ENCODE measurements at regions of chr1 and their contacts with region 1.

Region 1: GRCh38 chr1:94191216-94191615 is 46.2 kb downstream of the ARHGAP29 start:
- DNase-seq: no peak
- H3K4me3 ChIP-seq: no peak overlapping the region
- H3K27ac ChIP-seq: peak overlapping the region; percentile 40
- H3K4me1 ChIP-seq: peaks cover 3% of the 10 kb centered on the region; the same call in 1 of the 2 replicates
- H3K27me3 ChIP-seq: no peaks in the 10 kb centered on the region
- CTCF ChIP-seq: no peak

Region 2: GRCh38 chr1:93904228-93904627 is 287.0 kb before region 1 on chr1:
- CTCF ChIA-PET with region 1: no interaction called
- POLR2A ChIA-PET with region 1: no interaction called
- intact Hi-C with region 1: loop called (anchors 10 kb)
- DNase-seq: peak in 1 of 2 experiments; percentile 28
- H3K4me3 ChIP-seq: peak overlapping the region; percentile 68; the same call in 1 of the 2 replicates
- H3K27ac ChIP-seq: peak overlapping the region; percentile 80
- H3K4me1 ChIP-seq: peaks cover 37% of the 10 kb centered on the region
- H3K27me3 ChIP-seq: no peaks in the 10 kb centered on the region
- CTCF ChIP-seq: no peak

Region 3: DNA sequence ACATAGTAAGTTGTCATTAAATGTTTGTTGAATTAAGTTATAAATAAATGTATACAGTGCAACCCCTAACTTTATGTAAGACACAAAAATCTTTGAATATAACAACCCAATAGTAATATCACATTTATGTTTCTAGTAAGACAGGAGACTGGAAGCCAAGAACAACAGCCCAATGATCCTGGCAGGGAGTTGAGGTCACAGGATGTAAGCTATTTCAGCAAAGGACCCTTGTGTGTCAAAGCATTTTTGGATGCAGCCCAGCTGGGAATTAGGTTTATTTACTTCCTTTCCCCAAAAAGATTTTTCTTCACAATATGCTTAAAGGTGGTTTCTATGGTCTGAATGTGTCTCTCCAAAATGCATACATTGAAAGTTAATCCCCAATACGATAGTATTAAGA is 36.2 kb before region 1 on chr1:
- CTCF ChIA-PET with region 1: no interaction called
- POLR2A ChIA-PET with region 1: no interaction called
- intact Hi-C with region 1: no loop called
- DNase-seq: no peak
- H3K4me3 ChIP-seq: no peak overlapping the region
- H3K27ac ChIP-seq: no peak overlapping the region
- H3K4me1 ChIP-seq: no peaks in the 10 kb centered on the region
- H3K27me3 ChIP-seq: no peaks in the 10 kb centered on the region
- CTCF ChIP-seq: no peak

Region 4: DNA sequence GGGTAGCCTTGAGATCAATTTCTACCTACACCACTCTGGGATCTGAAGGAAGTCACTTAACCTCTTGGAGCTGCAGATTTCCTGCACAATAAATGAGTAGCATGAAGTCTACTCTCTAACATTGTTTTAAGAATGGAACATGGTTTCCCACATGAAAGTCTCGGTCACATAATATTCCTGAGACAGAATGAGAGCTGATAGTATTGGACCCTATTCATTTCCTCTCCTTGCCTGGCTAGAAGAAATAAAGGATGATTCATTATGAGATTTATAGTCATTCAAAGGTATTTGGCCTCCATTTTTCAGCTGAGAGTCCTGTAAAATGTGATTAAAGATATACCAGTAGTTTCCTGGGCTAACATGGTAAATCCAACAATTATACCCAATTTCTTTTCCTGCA is 10.6 kb before region 1 on chr1:
- CTCF ChIA-PET with region 1: no interaction called
- POLR2A ChIA-PET with region 1: interaction called, 10 read pairs
- intact Hi-C with region 1: no loop called
- DNase-seq: no peak
- H3K4me3 ChIP-seq: no peak overlapping the region
- H3K27ac ChIP-seq: peak overlapping the region; percentile 31
- H3K4me1 ChIP-seq: no peaks in the 10 kb centered on the region
- H3K27me3 ChIP-seq: no peaks in the 10 kb centered on the region
- CTCF ChIP-seq: no peak

Region 5: DNA sequence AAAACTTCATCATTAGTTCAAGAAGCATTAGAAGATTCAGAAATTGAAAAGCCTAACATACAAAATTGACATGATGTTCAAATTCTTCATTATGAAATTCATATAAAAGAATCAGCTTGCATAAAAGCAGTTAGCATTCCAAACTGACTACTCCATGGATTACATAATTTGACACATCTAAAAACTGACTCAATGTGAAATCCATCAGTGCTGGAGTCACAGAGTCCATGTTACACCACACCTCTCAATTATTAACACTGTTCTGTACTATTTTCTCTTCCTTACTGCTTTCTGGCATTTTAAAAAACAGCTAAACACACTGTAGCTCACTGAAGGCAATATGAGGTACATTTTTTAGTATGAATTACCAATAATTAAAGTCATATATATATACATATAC is 18.2 kb after region 1 on chr1:
- CTCF ChIA-PET with region 1: interaction called, 10 read pairs
- POLR2A ChIA-PET with region 1: interaction called, 6 read pairs
- intact Hi-C with region 1: no loop called
- DNase-seq: peak in 1 of 2 experiments; percentile 80
- H3K4me3 ChIP-seq: no peak overlapping the region
- H3K27ac ChIP-seq: peak overlapping the region; percentile 35
- H3K4me1 ChIP-seq: peaks cover 6% of the 10 kb centered on the region
- H3K27me3 ChIP-seq: no peaks in the 10 kb centered on the region
- CTCF ChIP-seq: no peak

Region 6: DNA sequence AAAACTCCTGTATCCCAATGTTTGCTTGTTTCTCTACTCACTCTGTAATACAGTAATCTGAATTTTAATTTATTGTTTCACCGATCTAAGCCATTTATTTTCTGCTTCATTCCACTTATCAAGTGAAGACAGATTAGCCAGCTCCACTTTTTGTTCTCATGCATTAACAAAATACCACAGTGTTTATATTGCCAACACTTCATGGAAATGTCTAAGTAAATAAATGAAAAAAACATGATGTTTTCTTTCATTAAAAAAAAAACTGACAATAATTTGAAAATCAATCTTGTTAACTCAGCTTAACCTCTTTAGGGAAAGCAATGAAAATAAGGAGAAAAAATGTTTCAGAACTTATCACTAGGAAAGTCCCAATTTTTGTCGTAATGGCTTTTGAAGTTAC is 34.6 kb after region 1 on chr1:
- CTCF ChIA-PET with region 1: no interaction called
- POLR2A ChIA-PET with region 1: no interaction called
- intact Hi-C with region 1: no loop called
- DNase-seq: no peak
- H3K4me3 ChIP-seq: 0 out of 2 replicates have a peak overlapping the region, but pooled peaks have one; percentile 3
- H3K27ac ChIP-seq: peak overlapping the region; percentile 85
- H3K4me1 ChIP-seq: peaks cover 60% of the 10 kb centered on the region
- H3K27me3 ChIP-seq: no peaks in the 10 kb centered on the region
- CTCF ChIP-seq: no peak

Region 7: DNA sequence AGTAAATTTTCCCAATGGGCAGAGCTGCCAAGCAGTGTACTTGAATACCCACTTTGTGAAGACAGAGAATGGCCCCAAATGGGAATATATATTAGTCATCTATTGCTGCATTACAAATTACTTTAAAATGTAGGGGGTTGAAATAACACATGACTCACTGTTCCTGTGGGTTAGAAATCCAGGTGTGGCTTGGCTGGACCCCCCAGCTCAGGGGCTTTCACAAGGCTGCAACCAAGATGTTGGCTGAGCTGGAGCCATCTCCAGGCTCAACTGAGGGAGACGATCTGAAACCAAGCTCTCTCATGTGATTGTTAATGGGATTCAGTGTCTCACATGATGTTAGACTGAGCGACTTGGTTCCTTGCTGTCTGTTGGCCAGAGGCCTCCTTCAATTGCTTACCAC is 79.6 kb after region 1 on chr1:
- CTCF ChIA-PET with region 1: no interaction called
- POLR2A ChIA-PET with region 1: no interaction called
- intact Hi-C with region 1: no loop called
- DNase-seq: peak; percentile 19 to 81
- H3K4me3 ChIP-seq: no peak overlapping the region
- H3K27ac ChIP-seq: peak overlapping the region; percentile 65
- H3K4me1 ChIP-seq: peaks cover 39% of the 10 kb centered on the region
- H3K27me3 ChIP-seq: no peaks in the 10 kb centered on the region
- CTCF ChIP-seq: no peak

Region 8: DNA sequence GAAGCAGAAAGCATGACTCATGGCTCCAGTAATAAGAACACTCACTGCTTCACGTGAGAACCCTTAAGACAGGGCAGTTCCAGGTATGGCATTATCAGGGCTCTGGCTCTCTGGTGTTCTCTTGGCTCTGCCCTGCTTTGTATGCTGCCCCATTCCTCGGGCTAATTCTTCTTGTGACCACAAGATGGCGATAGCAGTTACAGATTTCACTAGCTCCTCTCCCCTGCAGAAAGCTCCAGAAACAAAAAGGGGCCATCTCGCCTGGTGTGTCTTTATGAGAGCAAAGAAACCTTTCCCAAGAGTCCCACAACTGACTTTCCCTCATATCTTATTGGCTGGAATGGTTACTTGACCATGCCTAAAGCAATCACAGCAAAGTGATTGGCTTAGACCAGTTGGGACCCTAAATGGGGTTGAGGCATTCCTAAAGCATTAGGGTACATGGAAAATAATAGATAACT is 290.3 kb after region 1 on chr1:
- CTCF ChIA-PET with region 1: interaction called, 12 read pairs
- POLR2A ChIA-PET with region 1: no interaction called
- intact Hi-C with region 1: no loop called
- DNase-seq: peak; percentile 56 to 81
- H3K4me3 ChIP-seq: no peak overlapping the region
- H3K27ac ChIP-seq: no peak overlapping the region
- H3K4me1 ChIP-seq: no peaks in the 10 kb centered on the region
- H3K27me3 ChIP-seq: no peaks in the 10 kb centered on the region
- CTCF ChIP-seq: peak; percentile 96